ENCODE measurements at regions of chr11 and their contacts with region 1.

Region 1: DNA sequence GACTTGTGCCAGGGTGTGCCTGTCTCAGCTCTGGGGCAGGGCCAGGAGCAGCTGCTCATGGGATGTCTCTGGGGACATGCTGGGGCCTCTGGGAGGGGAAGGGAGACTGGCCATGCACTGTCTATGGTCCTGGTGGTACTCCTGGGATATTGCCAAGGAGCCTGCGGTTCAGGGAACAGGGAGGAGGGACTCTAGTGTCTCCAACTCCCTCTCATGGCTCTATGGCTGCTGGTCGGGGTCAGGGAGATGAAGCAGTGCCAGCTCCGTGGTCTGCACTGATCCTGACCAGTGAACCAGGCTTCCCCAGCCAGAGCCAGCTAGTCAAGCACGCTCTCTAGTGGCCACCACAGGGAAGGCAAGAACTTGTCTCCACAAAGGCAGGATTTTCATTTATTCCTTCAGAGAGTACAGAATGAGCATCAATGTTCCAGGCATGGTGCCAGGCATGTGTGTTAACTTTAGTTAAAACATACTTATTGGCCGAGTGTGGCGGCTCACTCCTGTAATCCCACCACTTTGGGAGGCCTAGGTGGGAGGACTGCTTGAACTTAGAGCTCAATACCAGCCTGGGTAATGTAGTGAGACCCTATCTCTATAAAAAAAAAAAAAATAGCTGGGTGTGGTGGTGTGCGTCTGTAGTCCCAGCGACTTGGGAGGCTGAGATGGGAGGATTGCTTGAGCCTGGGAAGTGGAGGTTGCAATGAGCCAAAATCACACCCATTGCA is 2.5 kb upstream of the BEST1 start:
- DNase-seq: peak; percentile 82
- ATAC-seq: peak; percentile 77
- H3K4me3 Mint-ChIP-seq: no peak overlapping the region
- H3K27ac Mint-ChIP-seq: no peak overlapping the region
- H3K4me1 Mint-ChIP-seq: peaks cover 7% of the 10 kb centered on the region
- H3K27me3 Mint-ChIP-seq: peaks cover 3% of the 10 kb centered on the region
- CTCF ChIP-seq: peak; percentile 80

Region 2: GRCh38 chr11:61725781-61726231 is 221.8 kb before region 1 on chr11:
- CTCF ChIA-PET with region 1: no interaction called
- POLR2A ChIA-PET with region 1: no interaction called
- intact Hi-C with region 1: no loop called
- DNase-seq: no peak
- ATAC-seq: no peak
- H3K4me3 Mint-ChIP-seq: no peak overlapping the region
- H3K27ac Mint-ChIP-seq: no peak overlapping the region
- H3K4me1 Mint-ChIP-seq: peaks cover 4% of the 10 kb centered on the region
- H3K27me3 Mint-ChIP-seq: no peaks in the 10 kb centered on the region
- CTCF ChIP-seq: no peak

Region 3: DNA sequence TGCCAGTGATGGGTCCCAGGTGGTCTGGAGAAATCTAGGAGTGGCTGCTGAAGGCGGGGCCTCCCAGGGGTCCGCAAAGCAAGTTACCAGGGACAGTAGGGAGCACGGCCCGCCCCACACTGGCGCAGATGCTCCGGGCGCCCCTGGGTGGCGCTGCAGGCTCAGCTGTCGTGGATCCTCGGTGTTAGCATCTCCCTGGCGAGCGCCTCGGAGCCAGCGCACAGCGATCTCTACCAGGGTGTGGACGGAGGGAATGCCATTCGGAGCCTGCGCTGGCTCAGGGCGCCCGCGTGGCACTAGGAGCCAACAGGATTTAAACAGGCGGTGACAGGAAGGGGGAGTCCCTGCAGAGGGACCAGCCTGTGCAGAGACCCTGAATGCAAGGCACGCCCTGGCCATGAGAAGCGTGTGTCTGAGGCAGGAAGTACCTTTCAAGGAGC is 76.5 kb before region 1 on chr11:
- CTCF ChIA-PET with region 1: interaction called, 19 read pairs
- POLR2A ChIA-PET with region 1: interaction called, 5 read pairs
- intact Hi-C with region 1: no loop called
- DNase-seq: peak; percentile 80
- ATAC-seq: peak; percentile 97
- H3K4me3 Mint-ChIP-seq: peak overlapping the region; percentile 48
- H3K27ac Mint-ChIP-seq: no peak overlapping the region
- H3K4me1 Mint-ChIP-seq: peaks cover 2% of the 10 kb centered on the region
- H3K27me3 Mint-ChIP-seq: no peaks in the 10 kb centered on the region
- CTCF ChIP-seq: peak; percentile 95

Region 4: DNA sequence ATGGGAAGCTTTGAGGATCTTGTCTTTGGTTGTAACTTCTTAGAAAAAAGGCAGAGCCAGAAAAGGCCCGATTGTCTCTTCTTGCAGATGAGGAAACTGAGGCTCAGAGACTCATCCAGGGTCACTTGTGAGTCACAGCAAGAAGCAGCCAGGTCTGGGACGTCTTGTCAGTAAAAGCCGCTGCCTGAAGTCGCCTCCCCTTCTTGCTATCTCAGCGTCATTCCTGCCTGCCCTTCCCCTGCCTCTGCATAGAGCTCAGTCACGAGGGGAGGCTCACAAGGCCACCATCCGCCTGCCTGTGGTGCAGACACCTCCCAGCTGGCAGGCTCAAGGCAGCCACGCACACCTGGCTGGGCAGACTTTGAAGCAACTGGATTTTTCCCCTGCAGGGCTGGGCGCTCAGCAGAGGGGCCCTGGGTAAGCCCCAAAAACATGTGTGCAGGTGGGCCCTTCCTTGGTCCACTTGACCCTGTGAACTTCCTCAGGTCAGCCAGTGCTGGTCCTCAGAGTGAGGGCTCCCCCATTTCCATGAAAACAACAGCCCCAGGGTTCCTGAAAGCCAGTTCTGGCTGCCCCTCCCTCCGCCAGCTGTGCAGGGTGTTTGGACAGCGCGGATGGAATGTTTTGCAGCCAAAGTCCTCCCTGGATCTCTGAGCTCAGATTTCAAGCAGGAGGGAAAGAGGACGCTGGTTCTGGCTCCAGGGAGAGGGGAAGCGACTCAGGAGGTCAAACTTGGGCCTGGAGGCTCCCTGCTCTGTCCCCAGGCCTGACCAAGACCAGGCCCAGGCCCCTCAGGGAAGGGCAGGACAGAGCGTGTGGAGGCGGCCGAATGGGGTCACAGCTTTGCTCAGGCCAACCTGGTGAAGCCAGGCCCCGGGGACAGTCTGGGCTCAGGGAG is 24.2 kb before region 1 on chr11:
- CTCF ChIA-PET with region 1: interaction called, 12 read pairs
- POLR2A ChIA-PET with region 1: no interaction called
- intact Hi-C with region 1: no loop called
- DNase-seq: no peak
- ATAC-seq: no peak
- H3K4me3 Mint-ChIP-seq: no peak overlapping the region
- H3K27ac Mint-ChIP-seq: no peak overlapping the region
- H3K4me1 Mint-ChIP-seq: no peaks in the 10 kb centered on the region
- H3K27me3 Mint-ChIP-seq: peaks cover 24% of the 10 kb centered on the region
- CTCF ChIP-seq: no peak

Region 5: GRCh38 chr11:61930933-61931332 is 16.7 kb before region 1 on chr11:
- CTCF ChIA-PET with region 1: interaction called, 12 read pairs
- POLR2A ChIA-PET with region 1: no interaction called
- intact Hi-C with region 1: no loop called
- DNase-seq: no peak
- ATAC-seq: no peak
- H3K4me3 Mint-ChIP-seq: no peak overlapping the region
- H3K27ac Mint-ChIP-seq: no peak overlapping the region
- H3K4me1 Mint-ChIP-seq: no peaks in the 10 kb centered on the region
- H3K27me3 Mint-ChIP-seq: peaks cover 11% of the 10 kb centered on the region
- CTCF ChIP-seq: no peak

Region 6: GRCh38 chr11:61961570-61962212 is 14.0 kb after region 1 on chr11:
- CTCF ChIA-PET with region 1: interaction called, 21 read pairs
- POLR2A ChIA-PET with region 1: interaction called, 17 read pairs
- intact Hi-C with region 1: no loop called
- DNase-seq: no peak
- ATAC-seq: no peak
- H3K4me3 Mint-ChIP-seq: no peak overlapping the region
- H3K27ac Mint-ChIP-seq: no peak overlapping the region
- H3K4me1 Mint-ChIP-seq: peaks cover 26% of the 10 kb centered on the region
- H3K27me3 Mint-ChIP-seq: peaks cover under 1% of the 10 kb centered on the region
- CTCF ChIP-seq: no peak

Region 7: GRCh38 chr11:61967116-61967923 is 19.7 kb after region 1 on chr11 and contains the start of gene FTH1:
- CTCF ChIA-PET with region 1: interaction called, 21 read pairs
- POLR2A ChIA-PET with region 1: interaction called, 17 read pairs
- intact Hi-C with region 1: no loop called
- DNase-seq: peak; percentile 89
- ATAC-seq: peak; percentile 81
- H3K4me3 Mint-ChIP-seq: peak within 1 kb of the TSS; percentile 86
- H3K27ac Mint-ChIP-seq: peak within 1 kb of the TSS; percentile 94
- H3K4me1 Mint-ChIP-seq: peaks cover 61% of the 10 kb centered on the region
- H3K27me3 Mint-ChIP-seq: no peaks in the 10 kb centered on the region
- CTCF ChIP-seq: no peak
- total RNA-seq, gene FTH1: 700 to 729 TPM

Region 8: GRCh38 chr11:61978703-61979661 is 31.3 kb after region 1 on chr11:
- CTCF ChIA-PET with region 1: interaction called, 19 read pairs
- POLR2A ChIA-PET with region 1: no interaction called
- intact Hi-C with region 1: no loop called
- DNase-seq: no peak
- ATAC-seq: no peak
- H3K4me3 Mint-ChIP-seq: no peak overlapping the region
- H3K27ac Mint-ChIP-seq: no peak overlapping the region
- H3K4me1 Mint-ChIP-seq: peaks cover under 1% of the 10 kb centered on the region
- H3K27me3 Mint-ChIP-seq: no peaks in the 10 kb centered on the region
- CTCF ChIP-seq: no peak

Measured in activated CD8-positive, alpha-beta T cell treated with anti-CD3 and anti-CD28 coated beads for 36 hours (primary cell).